ENCODE measurements at regions of chrX and their contacts with region 1.

Region 1: DNA sequence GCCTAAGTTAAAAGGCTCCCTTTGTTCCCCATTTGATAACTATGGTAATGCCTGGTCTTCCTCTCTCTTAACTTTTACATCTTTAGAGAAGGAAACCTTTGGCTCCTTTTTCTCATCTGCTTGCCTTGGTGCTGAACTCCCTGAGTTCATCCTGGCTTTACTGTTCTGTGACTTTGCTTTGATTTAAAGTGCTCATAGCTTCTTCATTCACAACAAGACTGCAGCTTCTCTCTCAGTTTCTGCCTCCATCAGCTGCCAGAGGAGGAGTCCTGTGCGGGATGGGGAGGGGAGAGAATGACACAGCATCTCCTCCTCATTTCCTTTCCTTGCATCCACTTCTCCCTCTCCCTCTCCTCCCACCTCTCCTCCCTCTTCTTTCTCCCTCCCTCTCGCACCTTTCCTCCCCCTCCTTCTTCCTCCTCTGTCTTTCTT is 41.9 kb downstream of the CBLL2 start:
- DNase-seq: peak; percentile 42
- H3K4me3 ChIP-seq: no peak overlapping the region
- H3K27ac ChIP-seq: peak overlapping the region; percentile 78
- H3K4me1 ChIP-seq: peaks cover 17% of the 10 kb centered on the region
- H3K27me3 ChIP-seq: no peaks in the 10 kb centered on the region
- CTCF ChIP-seq: no peak
- POLR2A ChIP-seq: no peak

Region 2: DNA sequence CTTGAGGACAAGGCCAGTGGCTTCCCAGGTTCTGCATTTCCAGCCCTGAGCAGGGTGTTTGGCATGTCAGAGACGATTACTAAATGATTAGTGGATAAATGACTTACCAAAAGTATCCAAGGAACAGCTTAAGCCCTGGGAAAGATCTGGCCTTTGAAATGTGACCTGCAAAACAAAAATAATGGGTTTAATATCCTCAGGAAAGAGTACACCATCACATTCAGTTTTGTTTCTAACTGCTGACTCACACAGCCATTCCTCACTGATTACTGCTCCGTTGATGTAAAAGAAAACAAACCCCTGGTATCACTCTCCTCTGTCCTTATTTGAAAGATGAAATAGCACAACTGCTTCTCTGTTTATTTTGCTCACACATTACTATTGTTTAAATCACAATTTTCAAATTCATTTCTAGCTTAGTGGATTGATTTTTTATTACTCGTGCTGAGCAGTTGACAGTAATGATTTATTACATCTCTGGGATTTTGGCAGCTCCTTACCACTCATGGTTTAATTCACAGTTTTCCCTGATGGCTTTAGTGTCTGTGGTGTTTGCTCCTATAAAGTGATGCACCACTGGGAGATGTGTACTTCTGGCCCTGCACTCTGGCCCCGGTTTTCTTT is 75.0 kb after region 1 on chrX:
- CTCF ChIA-PET with region 1: no interaction called
- POLR2A ChIA-PET with region 1: no interaction called
- dilution Hi-C with region 1: no loop called
- intact Hi-C with region 1: loop called (anchors 5 kb)
- DNase-seq: peak; percentile 88
- H3K4me3 ChIP-seq: no peak overlapping the region
- H3K27ac ChIP-seq: peak overlapping the region; percentile 91
- H3K4me1 ChIP-seq: peaks cover 22% of the 10 kb centered on the region
- H3K27me3 ChIP-seq: no peaks in the 10 kb centered on the region
- CTCF ChIP-seq: no peak
- POLR2A ChIP-seq: no peak

Region 3: DNA sequence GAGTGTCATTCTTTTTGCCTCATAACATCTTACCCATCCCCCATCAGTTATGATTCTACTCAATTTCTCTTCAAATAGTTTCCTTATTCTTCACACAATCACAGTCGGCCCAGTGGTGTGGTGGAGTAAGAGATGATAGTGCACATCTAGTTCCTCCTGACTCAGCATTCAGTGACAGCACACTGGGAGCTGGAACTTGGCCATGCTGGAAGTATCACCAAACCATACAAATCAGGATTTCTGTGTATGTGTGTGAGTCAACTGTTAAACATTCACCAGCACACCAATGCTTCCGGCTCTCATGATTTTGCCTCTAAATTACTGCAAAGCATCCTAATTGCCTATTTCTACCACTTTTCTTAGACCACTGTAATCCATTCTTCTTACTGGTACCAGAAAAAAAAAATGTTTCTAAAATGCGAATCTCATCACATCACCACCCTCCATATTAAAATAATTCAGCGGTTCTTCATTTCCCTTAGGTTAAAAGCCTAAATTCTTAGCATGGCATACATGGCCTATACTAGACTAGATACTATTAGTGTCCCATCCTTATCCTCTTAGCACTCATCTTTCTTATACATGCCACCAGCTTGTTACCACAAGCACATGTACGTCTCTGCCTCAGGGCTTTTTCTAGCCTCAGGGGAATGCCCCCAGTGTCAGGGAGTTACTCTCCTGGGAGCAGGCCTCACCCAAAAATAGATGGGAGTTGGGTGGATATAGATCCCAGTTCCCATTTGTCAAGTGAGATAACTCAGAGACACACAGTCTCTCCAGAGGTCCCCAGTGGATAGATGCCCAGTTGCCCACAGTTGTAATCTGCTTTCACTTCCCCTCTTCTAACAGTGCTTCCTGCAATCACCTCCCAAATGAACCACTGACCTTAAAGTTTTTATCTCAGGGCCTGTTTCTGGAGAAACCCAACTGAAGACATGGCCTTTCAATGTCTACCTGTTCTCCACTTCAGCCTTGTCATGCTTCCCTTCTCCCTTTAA is 635.9 kb after region 1 on chrX:
- CTCF ChIA-PET with region 1: no interaction called
- POLR2A ChIA-PET with region 1: no interaction called
- dilution Hi-C with region 1: no loop called
- intact Hi-C with region 1: loop called (anchors 5 kb)
- DNase-seq: peak; percentile 58
- H3K4me3 ChIP-seq: no peak overlapping the region
- H3K27ac ChIP-seq: peak overlapping the region; percentile 41
- H3K4me1 ChIP-seq: peaks cover 29% of the 10 kb centered on the region
- H3K27me3 ChIP-seq: no peaks in the 10 kb centered on the region
- CTCF ChIP-seq: no peak
- POLR2A ChIP-seq: no peak